ENCODE measurements at regions of chr1 and their contacts with region 1.

Region 1: DNA sequence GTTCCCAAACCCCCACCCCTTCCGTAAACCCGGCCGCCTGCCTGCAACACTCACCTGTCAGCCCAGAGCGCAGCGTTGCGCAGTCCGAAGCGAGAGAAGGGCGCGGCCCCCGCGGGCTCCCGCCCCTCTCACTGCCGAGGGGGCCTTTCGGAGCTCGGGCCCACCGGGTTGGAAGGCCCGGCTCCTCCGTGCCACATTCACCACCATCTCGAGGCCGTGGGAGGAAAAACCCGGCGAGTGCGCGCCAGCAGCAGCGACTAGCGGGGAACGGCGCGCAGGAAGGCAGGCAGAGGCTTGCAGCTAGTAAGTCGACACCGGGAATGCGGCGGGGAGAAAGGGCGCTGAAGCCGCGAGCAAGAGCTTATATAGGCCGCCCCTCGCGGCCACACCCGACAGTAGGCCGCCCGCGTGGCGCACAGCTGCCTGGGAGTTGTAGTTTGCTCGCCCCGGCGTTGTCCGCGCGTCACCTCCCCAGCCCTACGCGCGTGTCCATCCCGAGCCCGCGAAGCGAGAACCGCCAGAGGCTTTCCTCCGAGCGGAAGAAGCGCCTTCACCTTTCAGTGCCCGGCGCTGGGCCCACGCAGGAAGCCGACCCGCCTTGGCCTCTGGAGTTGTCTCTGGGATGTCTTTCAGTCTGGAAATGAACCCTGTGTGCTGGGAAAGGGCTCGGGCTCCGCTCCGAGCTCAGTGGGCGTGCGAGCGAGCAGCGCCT is 10.4 kb upstream of the RAB42 start:
- DNase-seq: peak; percentile 95
- H3K4me3 Mint-ChIP-seq: peak overlapping the region; percentile 92
- H3K27ac Mint-ChIP-seq: peak overlapping the region; percentile 92
- H3K4me1 Mint-ChIP-seq: peaks cover 38% of the 10 kb centered on the region
- H3K27me3 Mint-ChIP-seq: no peaks in the 10 kb centered on the region

Region 2: GRCh38 chr1:28088168-28088961 is 493.3 kb before region 1 on chr1 and contains the start of gene EYA3:
- CTCF ChIA-PET with region 1: no interaction called
- POLR2A ChIA-PET with region 1: interaction called, 10 read pairs
- DNase-seq: peak; percentile 100
- H3K4me3 Mint-ChIP-seq: peak within 1 kb of the TSS; percentile 99
- H3K27ac Mint-ChIP-seq: peak within 1 kb of the TSS; percentile 97
- H3K4me1 Mint-ChIP-seq: peaks cover 38% of the 10 kb centered on the region
- H3K27me3 Mint-ChIP-seq: peaks cover 6% of the 10 kb centered on the region
- total RNA-seq, gene EYA3: 29.5 to 32.0 TPM

Region 3: GRCh38 chr1:28369371-28370238 is 212.1 kb before region 1 on chr1 and contains the start of gene PHACTR4:
- CTCF ChIA-PET with region 1: no interaction called
- POLR2A ChIA-PET with region 1: interaction called, 22 read pairs
- DNase-seq: peak; percentile 85
- H3K4me3 Mint-ChIP-seq: peak within 1 kb of the TSS; percentile 96
- H3K27ac Mint-ChIP-seq: peak within 1 kb of the TSS; percentile 83
- H3K4me1 Mint-ChIP-seq: peaks cover 32% of the 10 kb centered on the region
- H3K27me3 Mint-ChIP-seq: no peaks in the 10 kb centered on the region
- total RNA-seq, gene PHACTR4: 24.8 to 25.7 TPM

Region 4: DNA sequence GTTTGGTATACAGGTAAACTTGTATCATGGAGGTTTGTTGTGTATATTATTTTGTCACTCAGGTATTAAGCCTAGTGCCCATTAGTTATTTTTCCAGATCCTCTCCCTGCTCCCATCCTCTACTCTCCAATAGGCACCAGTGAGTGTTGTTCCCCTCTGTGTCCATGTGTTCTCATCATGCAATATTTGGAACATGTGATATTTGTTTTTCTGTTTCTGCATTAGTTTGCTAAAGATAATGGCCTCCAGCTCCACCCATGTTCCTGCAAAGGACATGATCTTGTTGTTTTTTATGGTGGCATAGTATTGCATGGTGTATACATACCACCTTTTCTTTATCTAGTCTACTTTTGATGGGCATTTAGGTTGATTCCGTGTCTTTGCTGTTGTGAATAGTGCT is 201.3 kb before region 1 on chr1:
- CTCF ChIA-PET with region 1: no interaction called
- POLR2A ChIA-PET with region 1: no interaction called
- DNase-seq: no peak
- H3K4me3 Mint-ChIP-seq: no peak overlapping the region
- H3K27ac Mint-ChIP-seq: no peak overlapping the region
- H3K4me1 Mint-ChIP-seq: peaks cover 6% of the 10 kb centered on the region
- H3K27me3 Mint-ChIP-seq: no peaks in the 10 kb centered on the region

Region 5: GRCh38 chr1:28518000-28518744 is 63.5 kb before region 1 on chr1:
- CTCF ChIA-PET with region 1: interaction called, 24 read pairs
- POLR2A ChIA-PET with region 1: interaction called, 264 read pairs
- DNase-seq: peak; percentile 90
- H3K4me3 Mint-ChIP-seq: peak overlapping the region; percentile 86
- H3K27ac Mint-ChIP-seq: peak overlapping the region; percentile 80
- H3K4me1 Mint-ChIP-seq: peaks cover 55% of the 10 kb centered on the region
- H3K27me3 Mint-ChIP-seq: no peaks in the 10 kb centered on the region

Region 6: GRCh38 chr1:28591708-28592320 is 10.1 kb after region 1 on chr1 and contains the start of gene RAB42:
- CTCF ChIA-PET with region 1: interaction called, 3 read pairs
- POLR2A ChIA-PET with region 1: interaction called, 19 read pairs
- DNase-seq: no peak
- H3K4me3 Mint-ChIP-seq: peak within 1 kb of the TSS; percentile 43
- H3K27ac Mint-ChIP-seq: no peak within 1 kb of the TSS
- H3K4me1 Mint-ChIP-seq: peaks cover 8% of the 10 kb centered on the region
- H3K27me3 Mint-ChIP-seq: peaks cover 9% of the 10 kb centered on the region
- total RNA-seq, gene RAB42: not detected

Region 7: DNA sequence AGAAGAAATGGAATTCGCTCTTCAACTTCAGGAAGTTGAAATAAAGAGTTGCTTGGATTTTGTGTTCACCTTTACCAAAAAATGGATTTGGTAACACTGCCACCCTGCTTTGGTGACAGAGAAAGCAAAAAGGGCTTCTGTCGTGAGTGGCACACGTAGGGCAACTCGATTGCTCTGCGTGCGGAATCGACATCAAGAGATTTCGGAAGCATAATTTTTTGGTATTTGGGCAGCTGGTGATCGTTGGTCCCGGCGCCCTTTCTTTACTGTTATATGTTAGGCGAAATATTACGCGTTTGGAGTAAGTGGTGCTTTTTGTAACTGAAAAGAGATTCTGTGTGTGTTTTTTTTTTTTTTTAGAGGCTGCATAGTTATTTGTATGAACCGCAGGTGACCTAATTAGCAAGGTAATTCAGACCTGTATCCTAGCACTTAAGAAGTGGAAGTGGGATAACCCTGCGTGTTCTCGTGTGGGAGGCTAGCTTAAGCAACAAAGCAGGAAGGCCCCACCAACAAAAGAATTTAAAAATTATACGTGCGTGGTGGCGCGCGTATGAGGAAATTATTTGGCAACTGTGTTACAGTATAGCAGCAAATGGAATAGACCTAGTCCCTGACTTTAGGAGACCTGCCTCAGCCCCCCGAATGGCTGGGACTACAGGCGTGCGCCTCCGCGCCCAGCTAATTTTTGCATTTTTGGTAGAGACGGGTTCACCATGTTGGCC is 66.9 kb after region 1 on chr1 and contains the start of gene RNU11:
- CTCF ChIA-PET with region 1: interaction called, 11 read pairs
- POLR2A ChIA-PET with region 1: interaction called, 166 read pairs
- DNase-seq: peak; percentile 90
- H3K4me3 Mint-ChIP-seq: peak within 1 kb of the TSS; percentile 79
- H3K27ac Mint-ChIP-seq: peak within 1 kb of the TSS; percentile 99
- H3K4me1 Mint-ChIP-seq: peaks cover 33% of the 10 kb centered on the region
- H3K27me3 Mint-ChIP-seq: no peaks in the 10 kb centered on the region
- total RNA-seq, gene RNU11: not detected

Region 8: DNA sequence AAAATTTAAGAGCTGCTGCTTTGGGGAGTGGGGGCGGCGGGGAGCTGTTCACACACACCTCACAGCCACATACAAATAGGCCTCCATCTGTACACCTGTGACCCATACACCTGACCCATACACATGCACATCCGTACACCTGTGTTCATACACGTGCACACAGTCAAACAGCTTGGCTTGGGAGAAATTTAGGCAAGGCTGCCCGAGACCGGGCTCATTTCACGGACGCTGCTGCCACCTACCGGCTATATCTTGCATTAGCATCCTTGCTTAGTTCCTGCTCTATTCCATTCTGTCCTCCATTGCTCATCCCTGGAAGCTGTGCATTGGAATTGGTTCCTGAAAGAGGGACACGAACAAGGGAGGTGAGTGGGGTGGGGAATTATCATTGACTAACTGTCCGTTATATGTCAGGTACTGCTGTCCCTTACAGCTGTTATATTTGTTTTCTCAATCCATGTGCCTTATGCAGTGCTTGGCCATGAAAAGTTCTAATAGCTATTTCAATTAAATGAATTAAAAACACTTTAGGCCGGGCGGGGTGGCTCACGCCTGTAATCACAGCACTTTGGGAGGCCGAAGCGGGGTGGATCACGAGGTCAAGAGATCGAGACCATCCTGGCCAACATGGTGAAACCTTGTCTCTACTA is 295.6 kb after region 1 on chr1:
- CTCF ChIA-PET with region 1: interaction called, 15 read pairs
- POLR2A ChIA-PET with region 1: interaction called, 14 read pairs
- DNase-seq: peak; percentile 81
- H3K4me3 Mint-ChIP-seq: no peak overlapping the region
- H3K27ac Mint-ChIP-seq: no peak overlapping the region
- H3K4me1 Mint-ChIP-seq: peaks cover 6% of the 10 kb centered on the region
- H3K27me3 Mint-ChIP-seq: peaks cover 4% of the 10 kb centered on the region